HEK293 (cell line): ENCODE measurements at regions of chr5 and their contacts with region 1.

Region 1: GRCh38 chr5:54310433-54311175 is at the start of gene ARL15:
- H3K4me3 ChIP-seq: peak within 1 kb of the TSS; percentile 97
- H3K27ac ChIP-seq: peak within 1 kb of the TSS; percentile 86
- H3K4me1 ChIP-seq: peaks cover 11% of the 10 kb centered on the region
- CTCF ChIP-seq: peak; percentile 43; the same call in 1 of the 2 replicates

Region 2: GRCh38 chr5:54243473-54244080 is 67.0 kb before region 1 on chr5:
- CTCF ChIA-PET with region 1: interaction called, 12 read pairs
- POLR2A ChIA-PET with region 1: interaction called, 37 read pairs
- H3K4me3 ChIP-seq: no peak overlapping the region
- H3K27ac ChIP-seq: no peak overlapping the region
- H3K4me1 ChIP-seq: no peaks in the 10 kb centered on the region
- CTCF ChIP-seq: peak; percentile 17; the same call in 1 of the 2 replicates

Region 3: DNA sequence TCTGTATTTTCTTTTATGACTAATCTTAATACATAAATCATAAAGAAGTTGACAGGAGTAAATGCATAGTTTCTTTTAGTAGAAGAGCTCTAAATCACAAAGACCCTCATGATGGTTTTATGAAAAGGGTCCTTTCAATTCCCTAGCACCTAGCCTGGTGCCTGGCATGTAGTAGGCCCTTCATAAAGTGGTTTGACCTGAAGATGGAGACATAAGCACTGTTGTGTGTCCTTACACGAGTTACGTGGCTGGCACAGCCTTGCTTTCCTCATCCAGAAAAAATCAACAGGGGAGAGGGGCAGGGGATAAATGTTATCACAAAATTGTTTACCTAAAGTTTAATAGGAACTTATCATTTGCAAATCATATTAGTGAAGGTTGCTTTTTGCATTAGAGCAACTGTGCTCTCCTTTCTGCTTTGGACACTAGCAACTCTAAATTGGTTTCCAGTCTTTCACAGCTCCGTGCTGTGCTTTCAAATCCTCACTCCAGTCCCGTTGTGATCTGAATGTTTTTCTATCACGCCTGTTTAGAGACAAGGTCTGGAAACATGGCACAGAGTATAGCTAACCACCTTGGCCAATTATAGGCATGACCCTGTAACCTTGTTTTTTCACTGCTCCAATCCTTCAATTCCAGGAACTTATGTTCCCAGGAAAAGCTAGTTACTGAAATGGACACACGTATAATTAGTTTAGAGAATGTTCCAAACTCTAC is 56.0 kb before region 1 on chr5:
- CTCF ChIA-PET with region 1: interaction called, 4 read pairs
- POLR2A ChIA-PET with region 1: interaction called, 37 read pairs
- H3K4me3 ChIP-seq: no peak overlapping the region
- H3K27ac ChIP-seq: no peak overlapping the region
- H3K4me1 ChIP-seq: peaks cover 6% of the 10 kb centered on the region
- CTCF ChIP-seq: no peak

Region 4: GRCh38 chr5:54329731-54330709 is 19.4 kb after region 1 on chr5:
- CTCF ChIA-PET with region 1: interaction called, 5 read pairs
- POLR2A ChIA-PET with region 1: interaction called, 47 read pairs
- H3K4me3 ChIP-seq: no peak overlapping the region
- H3K27ac ChIP-seq: no peak overlapping the region
- H3K4me1 ChIP-seq: no peaks in the 10 kb centered on the region
- CTCF ChIP-seq: no peak

Region 5: GRCh38 chr5:54415896-54416601 is 105.4 kb after region 1 on chr5:
- CTCF ChIA-PET with region 1: interaction called, 11 read pairs
- POLR2A ChIA-PET with region 1: interaction called, 18 read pairs
- H3K4me3 ChIP-seq: no peak overlapping the region
- H3K27ac ChIP-seq: no peak overlapping the region
- H3K4me1 ChIP-seq: no peaks in the 10 kb centered on the region
- CTCF ChIP-seq: no peak